PC-9 (cell line): ENCODE measurements at regions of chr16 and their contacts with region 1.

Region 1: GRCh38 chr16:8963825-8964441 is at the start of gene USP7:
- DNase-seq: peak; percentile 48 to 92
- H3K4me3 ChIP-seq: peak within 1 kb of the TSS; percentile 76
- H3K27ac ChIP-seq: no peak within 1 kb of the TSS; the same call in 1 of the 2 replicates
- H3K4me1 ChIP-seq: peaks cover 46% of the 10 kb centered on the region
- H3K27me3 ChIP-seq: no peaks in the 10 kb centered on the region
- CTCF ChIP-seq: no peak
- total RNA-seq, gene USP7: 113 and 167 TPM in 2 replicates

Region 2: GRCh38 chr16:8905168-8905762 is 58.7 kb before region 1 on chr16:
- CTCF ChIA-PET with region 1: interaction called, 10 read pairs
- POLR2A ChIA-PET with region 1: no interaction called
- intact Hi-C with region 1: loop called (anchors 5 kb)
- DNase-seq: peak; percentile 17 to 48
- H3K4me3 ChIP-seq: no peak overlapping the region
- H3K27ac ChIP-seq: no peak overlapping the region
- H3K4me1 ChIP-seq: peaks cover 15% of the 10 kb centered on the region
- H3K27me3 ChIP-seq: no peaks in the 10 kb centered on the region
- CTCF ChIP-seq: peak; percentile 59

Region 3: DNA sequence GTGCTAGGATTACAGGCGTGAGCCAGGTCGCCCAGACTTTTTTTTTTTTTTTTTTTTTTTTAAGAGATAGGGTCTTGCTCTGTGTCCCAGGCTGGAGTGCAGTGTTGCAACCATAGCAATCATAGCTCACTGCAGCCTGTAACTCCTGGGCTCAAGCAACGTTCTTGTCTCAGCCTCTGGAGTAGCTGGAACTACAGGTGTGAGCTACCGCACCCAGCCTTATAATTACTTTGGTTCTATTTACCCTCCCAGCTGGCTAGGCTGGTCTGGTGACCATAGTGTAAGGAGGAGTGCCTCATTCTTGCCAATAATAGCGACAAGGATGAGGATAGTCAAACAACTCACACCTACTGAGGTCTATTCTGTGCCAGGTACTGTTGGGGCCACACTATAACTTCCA is 39.4 kb after region 1 on chr16:
- CTCF ChIA-PET with region 1: interaction called, 5 read pairs
- POLR2A ChIA-PET with region 1: interaction called, 3 read pairs
- intact Hi-C with region 1: loop called (anchors 5 kb)
- DNase-seq: peak; percentile 52 to 73
- H3K4me3 ChIP-seq: no peak overlapping the region
- H3K27ac ChIP-seq: no peak overlapping the region
- H3K4me1 ChIP-seq: peaks cover 14% of the 10 kb centered on the region
- H3K27me3 ChIP-seq: no peaks in the 10 kb centered on the region
- CTCF ChIP-seq: no peak

Region 4: GRCh38 chr16:9170470-9170869 is 206.5 kb after region 1 on chr16:
- CTCF ChIA-PET with region 1: no interaction called
- POLR2A ChIA-PET with region 1: no interaction called
- intact Hi-C with region 1: no loop called
- DNase-seq: no peak
- H3K4me3 ChIP-seq: no peak overlapping the region
- H3K27ac ChIP-seq: no peak overlapping the region
- H3K4me1 ChIP-seq: no peaks in the 10 kb centered on the region
- H3K27me3 ChIP-seq: peaks cover 47% of the 10 kb centered on the region
- CTCF ChIP-seq: no peak